IMR-90 (cell line): ENCODE measurements at regions of chr17 and their contacts with region 1.

Region 1: GRCh38 chr17:42843358-42843934 is 934 bp upstream of the AOC2 start:
- DNase-seq: peak; percentile 74
- ATAC-seq: peak; percentile 85
- H3K4me3 ChIP-seq: no peak overlapping the region
- H3K27ac ChIP-seq: no peak overlapping the region
- H3K4me1 ChIP-seq: no peaks in the 10 kb centered on the region
- H3K27me3 ChIP-seq: no peaks in the 10 kb centered on the region
- CTCF ChIP-seq: peak; percentile 98
- POLR2A ChIP-seq: peak; percentile 53; the same call in 1 of the 2 replicates
- RAD21 ChIP-seq: peak; percentile 97

Region 2: GRCh38 chr17:42928714-42929496 is 85.5 kb after region 1 on chr17:
- CTCF ChIA-PET with region 1: interaction called, 6 read pairs
- POLR2A ChIA-PET with region 1: no interaction called
- dilution Hi-C with region 1: no loop called
- in situ Hi-C with region 1: no loop called
- intact Hi-C with region 1: loop called (anchors 1 kb)
- DNase-seq: peak; percentile 85
- ATAC-seq: peak; percentile 99
- H3K4me3 ChIP-seq: no peak overlapping the region
- H3K27ac ChIP-seq: no peak overlapping the region; the same call in 1 of the 2 replicates
- H3K4me1 ChIP-seq: peaks cover 5% of the 10 kb centered on the region; the same call in 1 of the 2 replicates
- H3K27me3 ChIP-seq: peaks cover 7% of the 10 kb centered on the region
- CTCF ChIP-seq: peak; percentile 62
- POLR2A ChIP-seq: no peak
- RAD21 ChIP-seq: peak; percentile 69

Region 3: GRCh38 chr17:42937712-42938596 is 94.5 kb after region 1 on chr17:
- CTCF ChIA-PET with region 1: interaction called, 8 read pairs
- POLR2A ChIA-PET with region 1: no interaction called
- dilution Hi-C with region 1: no loop called
- in situ Hi-C with region 1: loop called (anchors 5 kb)
- intact Hi-C with region 1: loop called (anchors 1 kb)
- DNase-seq: peak; percentile 64
- ATAC-seq: peak; percentile 91
- H3K4me3 ChIP-seq: no peak overlapping the region
- H3K27ac ChIP-seq: no peak overlapping the region
- H3K4me1 ChIP-seq: no peaks in the 10 kb centered on the region
- H3K27me3 ChIP-seq: peaks cover 20% of the 10 kb centered on the region
- CTCF ChIP-seq: peak; percentile 88
- POLR2A ChIP-seq: no peak
- RAD21 ChIP-seq: peak; percentile 90

Region 4: GRCh38 chr17:42964161-42964932 is 120.9 kb after region 1 on chr17 and contains the start of gene AARSD1:
- CTCF ChIA-PET with region 1: no interaction called
- POLR2A ChIA-PET with region 1: no interaction called
- dilution Hi-C with region 1: no loop called
- in situ Hi-C with region 1: no loop called
- intact Hi-C with region 1: no loop called
- DNase-seq: peak; percentile 95
- ATAC-seq: peak; percentile 97
- H3K4me3 ChIP-seq: peak within 1 kb of the TSS; percentile 74
- H3K27ac ChIP-seq: peak within 1 kb of the TSS; percentile 81
- H3K4me1 ChIP-seq: peaks cover 4% of the 10 kb centered on the region
- H3K27me3 ChIP-seq: no peaks in the 10 kb centered on the region
- CTCF ChIP-seq: no peak
- POLR2A ChIP-seq: peak; percentile 80
- RAD21 ChIP-seq: peak; percentile 1; the same call in 1 of the 2 replicates
- total RNA-seq, gene AARSD1: 55.0 and 58.9 TPM in 2 replicates

Region 5: GRCh38 chr17:42997984-42998938 is 154.8 kb after region 1 on chr17 and contains the start of gene RPL27:
- CTCF ChIA-PET with region 1: interaction called, 3 read pairs
- POLR2A ChIA-PET with region 1: no interaction called
- dilution Hi-C with region 1: no loop called
- in situ Hi-C with region 1: no loop called
- intact Hi-C with region 1: loop called (anchors 1 kb)
- DNase-seq: peak; percentile 100
- ATAC-seq: peak; percentile 95
- H3K4me3 ChIP-seq: peak within 1 kb of the TSS; percentile 64
- H3K27ac ChIP-seq: peak within 1 kb of the TSS; percentile 86
- H3K4me1 ChIP-seq: peaks cover 6% of the 10 kb centered on the region
- H3K27me3 ChIP-seq: no peaks in the 10 kb centered on the region
- CTCF ChIP-seq: peak; percentile 88
- POLR2A ChIP-seq: peak; percentile 97
- RAD21 ChIP-seq: peak; percentile 67
- total RNA-seq, gene RPL27: 1,595 and 1,663 TPM in 2 replicates

Region 6: DNA sequence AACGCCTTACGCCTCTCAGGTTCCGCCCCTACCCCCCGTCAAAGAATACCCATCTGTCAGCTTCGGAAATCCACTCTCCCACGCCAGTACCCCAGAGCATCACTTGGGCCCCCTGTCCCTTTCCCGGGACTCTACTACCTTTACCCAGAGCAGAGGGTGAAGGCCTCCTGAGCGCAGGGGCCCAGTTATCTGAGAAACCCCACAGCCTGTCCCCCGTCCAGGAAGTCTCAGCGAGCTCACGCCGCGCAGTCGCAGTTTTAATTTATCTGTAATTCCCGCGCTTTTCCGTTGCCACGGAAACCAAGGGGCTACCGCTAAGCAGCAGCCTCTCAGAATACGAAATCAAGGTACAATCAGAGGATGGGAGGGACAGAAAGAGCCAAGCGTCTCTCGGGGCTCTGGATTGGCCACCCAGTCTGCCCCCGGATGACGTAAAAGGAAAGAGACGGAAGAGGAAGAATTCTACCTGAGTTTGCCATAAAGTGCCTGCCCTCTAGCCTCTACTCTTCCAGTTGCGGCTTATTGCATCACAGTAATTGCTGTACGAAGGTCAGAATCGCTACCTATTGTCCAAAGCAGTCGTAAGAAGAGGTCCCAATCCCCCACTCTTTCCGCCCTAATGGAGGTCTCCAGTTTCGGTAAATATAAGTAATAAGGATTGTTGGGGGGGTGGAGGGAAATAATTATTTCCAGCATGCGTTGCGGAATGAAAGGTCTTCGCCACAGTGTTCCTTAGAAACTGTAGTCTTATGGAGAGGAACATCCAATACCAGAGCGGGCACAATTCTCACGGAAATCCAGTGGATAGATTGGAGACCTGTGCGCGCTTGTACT is 281.9 kb after region 1 on chr17 and contains the start of gene BRCA1:
- CTCF ChIA-PET with region 1: no interaction called
- POLR2A ChIA-PET with region 1: no interaction called
- dilution Hi-C with region 1: no loop called
- in situ Hi-C with region 1: no loop called
- intact Hi-C with region 1: loop called (anchors 5 kb)
- DNase-seq: peak; percentile 99
- ATAC-seq: peak; percentile 99
- H3K4me3 ChIP-seq: peak within 1 kb of the TSS; percentile 73
- H3K27ac ChIP-seq: peak within 1 kb of the TSS; percentile 38
- H3K4me1 ChIP-seq: peaks cover 6% of the 10 kb centered on the region; the same call in 1 of the 2 replicates
- H3K27me3 ChIP-seq: no peaks in the 10 kb centered on the region
- CTCF ChIP-seq: no peak
- POLR2A ChIP-seq: peak; percentile 73
- RAD21 ChIP-seq: no peak
- total RNA-seq, gene BRCA1: 17.7 and 20.0 TPM in 2 replicates